SK-N-SH (cell line): ENCODE measurements at regions of chr7 and their contacts with region 1.

Region 1: DNA sequence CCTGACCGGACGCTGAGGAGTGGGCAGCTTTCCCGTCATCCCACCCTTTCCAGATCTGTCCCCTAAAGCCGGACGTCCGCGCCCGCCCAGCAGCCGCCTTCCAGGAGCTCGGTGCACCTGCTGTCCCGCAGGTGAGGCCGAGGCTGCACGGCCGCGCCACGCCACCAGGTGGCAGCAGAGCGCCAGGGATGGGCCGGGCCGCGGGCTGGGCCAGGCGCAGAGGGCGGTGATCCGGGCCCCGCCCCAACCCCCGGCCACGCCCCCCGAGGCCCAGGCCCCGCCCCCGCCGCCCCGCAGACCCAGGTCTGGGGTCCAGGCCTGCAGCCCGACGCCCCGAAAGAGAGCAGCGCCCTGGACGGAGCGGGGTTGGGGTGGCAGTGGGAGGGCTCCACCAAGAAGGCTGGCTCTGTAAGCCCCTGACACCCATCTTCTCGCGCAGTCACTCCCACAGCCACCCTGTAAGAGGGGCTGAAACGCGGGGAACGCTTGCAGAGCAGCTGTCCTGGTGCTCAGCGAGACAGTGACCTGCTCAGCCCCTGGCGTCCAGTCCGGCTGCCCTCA is 32.2 kb downstream of the FOXL3 start:
- DNase-seq: peak; percentile 100
- H3K4me3 ChIP-seq: peak overlapping the region in 1 of 2 experiments; percentile 35; a peak in 1 of 4 replicates
- H3K27ac ChIP-seq: no peak overlapping the region
- H3K4me1 ChIP-seq: peaks cover 0 to 22% of the 10 kb centered on the region in 2 experiments; a peak in 1 of 4 replicates
- H3K27me3 ChIP-seq: peaks cover 39% of the 10 kb centered on the region
- CTCF ChIP-seq: peak; percentile 90
- EP300 ChIP-seq: no peak
- RAD21 ChIP-seq: peak; percentile 89

Region 2: DNA sequence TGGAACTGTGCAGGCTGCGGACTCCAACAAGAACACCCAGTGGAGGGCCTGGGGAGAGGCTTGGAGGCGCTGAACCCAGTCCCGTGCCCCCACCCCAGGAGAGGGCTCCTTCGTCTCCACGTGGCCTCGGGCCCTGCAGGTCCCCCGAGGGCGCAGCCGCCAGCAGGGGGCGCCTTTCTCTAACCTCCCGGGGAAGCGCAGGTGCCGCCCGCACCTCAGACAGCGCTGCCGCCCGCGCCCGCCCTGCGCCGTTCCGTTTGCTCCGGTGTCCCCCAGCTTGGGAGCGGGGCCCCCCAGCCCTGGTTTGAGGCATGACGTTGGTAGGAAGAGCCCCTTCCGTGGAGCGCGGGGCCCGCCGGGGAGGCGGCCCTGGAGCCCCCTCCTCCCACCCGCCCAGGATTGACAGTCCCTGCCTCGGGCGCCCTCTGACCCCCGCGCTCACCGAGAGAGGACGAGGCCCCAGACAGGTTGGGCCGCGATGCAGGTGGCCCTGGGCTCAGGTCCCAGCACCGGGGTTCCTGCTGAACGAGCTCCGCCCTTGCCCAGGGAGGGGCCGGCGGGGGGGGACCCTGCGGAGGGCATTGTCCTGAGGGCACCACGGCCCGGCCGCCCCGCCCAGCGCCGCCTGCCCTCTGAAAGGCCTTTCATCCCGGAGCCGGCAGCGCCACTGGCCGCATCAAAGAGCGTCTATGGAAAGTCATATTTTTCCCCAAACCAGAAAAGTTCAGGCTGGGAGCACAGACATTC is 10.6 kb after region 1 on chr7:
- CTCF ChIA-PET with region 1: interaction called, 55 read pairs
- POLR2A ChIA-PET with region 1: no interaction called
- DNase-seq: peak; percentile 97
- H3K4me3 ChIP-seq: peak overlapping the region; percentile 36 to 58
- H3K27ac ChIP-seq: no peak overlapping the region
- H3K4me1 ChIP-seq: peaks cover 0 to 3% of the 10 kb centered on the region in 2 experiments; a peak in 1 of 4 replicates
- H3K27me3 ChIP-seq: peaks cover 26% of the 10 kb centered on the region; the same call in 1 of the 2 replicates
- CTCF ChIP-seq: peak; percentile 82
- EP300 ChIP-seq: no peak
- RAD21 ChIP-seq: peak; percentile 69

Region 3: DNA sequence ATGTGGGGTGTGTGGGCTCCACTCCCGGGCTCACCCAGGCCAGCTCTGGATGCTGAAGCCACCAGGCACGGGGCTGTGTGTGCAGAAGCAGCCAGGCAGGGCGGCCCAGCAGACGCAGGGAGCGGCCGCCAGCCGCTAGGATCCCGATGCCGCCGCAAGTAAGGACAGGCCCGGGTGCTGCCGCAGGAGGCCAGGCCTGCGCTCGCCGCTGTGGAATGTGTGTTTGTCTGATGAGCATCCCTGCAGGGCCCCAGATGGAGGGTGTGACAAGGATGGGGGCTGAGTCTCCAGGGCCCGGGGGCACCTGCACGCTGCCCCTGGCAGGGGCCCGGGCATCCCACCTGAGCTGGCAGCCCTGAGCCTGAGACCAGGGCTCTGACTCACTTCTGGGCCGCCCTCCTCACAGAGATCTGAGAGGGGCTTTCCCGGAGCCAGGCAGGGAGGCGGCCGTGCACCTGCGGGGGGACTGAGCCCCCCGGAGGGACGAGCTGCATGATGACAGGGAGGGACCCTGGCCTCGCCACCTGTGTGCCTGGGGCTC is 69.3 kb after region 1 on chr7:
- CTCF ChIA-PET with region 1: no interaction called
- POLR2A ChIA-PET with region 1: no interaction called
- DNase-seq: peak; percentile 39
- H3K4me3 ChIP-seq: no peak overlapping the region
- H3K27ac ChIP-seq: no peak overlapping the region
- H3K4me1 ChIP-seq: no peaks in the 10 kb centered on the region
- H3K27me3 ChIP-seq: no peaks in the 10 kb centered on the region
- CTCF ChIP-seq: no peak
- EP300 ChIP-seq: no peak
- RAD21 ChIP-seq: no peak

Region 4: DNA sequence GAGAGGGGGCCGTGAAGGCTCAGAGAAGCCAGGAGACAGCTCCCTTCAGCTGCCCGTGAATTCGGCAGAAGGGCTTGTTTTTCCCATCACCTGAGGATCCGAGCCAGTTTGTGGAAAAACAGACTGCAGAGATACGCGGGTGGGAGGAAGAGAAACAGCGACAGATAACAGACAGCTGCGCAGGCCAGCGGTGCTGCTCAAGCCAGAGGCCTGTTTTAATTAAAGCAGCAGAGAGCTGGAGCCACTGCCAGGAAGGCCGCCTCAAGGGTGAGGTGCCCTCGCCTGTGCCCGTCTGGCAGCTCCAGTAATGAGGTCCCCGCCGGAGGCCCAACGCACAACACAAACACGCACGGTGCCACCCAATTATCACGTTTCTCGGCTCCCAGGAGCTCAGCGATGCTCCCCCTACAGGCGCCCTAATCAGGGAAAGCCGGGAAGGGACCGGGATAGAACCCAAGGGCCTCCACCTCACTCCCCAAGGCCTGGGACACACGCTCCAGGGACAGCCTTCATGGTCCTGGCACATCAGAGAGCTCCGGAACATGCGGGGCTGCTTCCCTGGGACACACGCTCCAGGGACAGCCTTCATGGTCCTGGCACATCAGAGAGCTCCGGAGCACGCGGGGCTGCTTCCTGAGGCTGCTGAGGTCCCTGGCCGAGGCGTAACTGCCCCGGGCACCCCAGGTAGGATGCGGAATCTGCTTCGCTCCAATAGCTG is 343.7 kb after region 1 on chr7:
- CTCF ChIA-PET with region 1: interaction called, 16 read pairs
- POLR2A ChIA-PET with region 1: no interaction called
- DNase-seq: peak; percentile 88
- H3K4me3 ChIP-seq: no peak overlapping the region
- H3K27ac ChIP-seq: peak overlapping the region in 1 of 2 experiments; percentile 93; a peak in 2 of 4 replicates
- H3K4me1 ChIP-seq: peaks cover 0 to 34% of the 10 kb centered on the region in 2 experiments; a peak in 2 of 4 replicates
- H3K27me3 ChIP-seq: no peaks in the 10 kb centered on the region
- CTCF ChIP-seq: peak; percentile 15; the same call in 1 of the 2 replicates
- EP300 ChIP-seq: peak in 1 of 2 experiments; percentile 66; a peak in 1 of 4 replicates
- RAD21 ChIP-seq: peak; percentile 10; the same call in 1 of the 2 replicates

Region 5: DNA sequence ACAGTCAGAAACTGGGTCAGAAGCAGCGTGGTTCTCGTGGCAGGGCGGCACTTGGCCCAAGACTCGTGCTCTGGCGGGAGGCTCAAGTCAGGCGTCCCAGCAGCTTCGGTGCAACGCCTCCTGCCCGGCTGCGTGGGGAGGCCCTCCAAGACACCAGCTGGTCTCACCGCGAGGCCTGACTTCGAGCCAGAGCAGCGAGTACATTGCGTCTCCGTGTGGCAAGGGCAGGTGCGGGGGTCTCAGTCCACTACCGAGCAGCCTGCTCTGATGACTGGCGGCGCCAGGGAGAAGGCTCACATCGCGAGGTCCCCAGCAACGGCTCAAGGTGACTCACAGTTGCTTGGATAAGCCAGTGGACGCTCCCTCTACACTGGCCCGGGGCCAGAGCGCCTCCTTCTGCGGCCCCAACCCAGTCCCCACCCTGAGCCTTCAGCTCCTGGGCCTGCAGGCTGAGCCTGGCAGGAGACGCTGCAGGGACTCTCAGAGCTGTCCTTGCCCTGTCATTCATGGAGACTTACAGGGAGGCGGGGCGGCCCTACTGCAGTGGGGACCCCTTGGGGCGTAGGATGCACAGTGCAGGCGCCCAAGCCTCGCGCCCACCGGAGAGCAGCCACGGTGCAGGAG is 446.8 kb after region 1 on chr7:
- CTCF ChIA-PET with region 1: interaction called, 67 read pairs
- POLR2A ChIA-PET with region 1: interaction called, 3 read pairs
- DNase-seq: peak; percentile 78
- H3K4me3 ChIP-seq: peak overlapping the region; percentile 52 to 55
- H3K27ac ChIP-seq: peak overlapping the region; percentile 90 to 98
- H3K4me1 ChIP-seq: peaks cover 21 to 45% of the 10 kb centered on the region in 2 experiments
- H3K27me3 ChIP-seq: no peaks in the 10 kb centered on the region
- CTCF ChIP-seq: peak; percentile 39
- EP300 ChIP-seq: no peak
- RAD21 ChIP-seq: peak; percentile 11; the same call in 1 of the 2 replicates